A673 (cell line): ENCODE measurements at regions of chr6 and their contacts with region 1.

Region 1: GRCh38 chr6:127342946-127343808 is at the start of gene ECHDC1:
- DNase-seq: peak; percentile 92
- H3K4me3 ChIP-seq: peak within 1 kb of the TSS; percentile 86
- H3K27ac ChIP-seq: peak within 1 kb of the TSS; percentile 97
- H3K4me1 ChIP-seq: peaks cover 26% of the 10 kb centered on the region
- H3K27me3 ChIP-seq: no peaks in the 10 kb centered on the region
- CTCF ChIP-seq: no peak
- total RNA-seq, gene ECHDC1: 79.7 and 102 TPM in 2 replicates

Region 2: DNA sequence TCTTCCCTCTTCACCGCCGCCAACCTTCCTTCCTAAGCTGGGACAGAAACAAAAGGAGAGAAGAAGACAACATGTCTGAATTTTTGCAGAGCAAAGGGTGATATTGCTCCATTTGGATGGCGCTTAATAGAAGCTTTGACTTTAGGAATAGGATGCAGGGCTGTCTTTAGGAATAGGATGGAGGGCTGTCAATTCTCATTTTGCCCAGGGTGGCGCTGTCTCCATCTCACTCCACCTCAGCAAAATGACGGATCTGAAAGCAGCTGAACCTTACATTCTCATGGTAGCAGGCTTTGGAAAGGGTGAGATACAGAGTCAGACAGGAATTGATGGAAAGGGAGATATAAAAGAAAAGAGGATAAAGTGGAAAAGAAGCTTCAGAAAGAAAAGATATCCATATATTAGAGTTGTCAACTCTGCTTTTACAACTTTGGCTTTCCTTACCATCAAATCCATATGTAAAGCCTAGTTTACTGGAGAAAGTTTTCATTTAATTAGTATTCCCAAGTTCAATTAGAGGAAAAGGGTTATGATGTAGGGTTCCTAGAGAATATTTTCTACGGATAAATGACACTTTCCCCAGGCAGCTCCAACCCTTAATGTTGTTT is 173.6 kb after region 1 on chr6:
- CTCF ChIA-PET with region 1: interaction called, 11 read pairs
- POLR2A ChIA-PET with region 1: no interaction called
- intact Hi-C with region 1: loop called (anchors 2 kb)
- DNase-seq: peak; percentile 88
- H3K4me3 ChIP-seq: peak overlapping the region; percentile 73
- H3K27ac ChIP-seq: peak overlapping the region; percentile 63
- H3K4me1 ChIP-seq: peaks cover 27% of the 10 kb centered on the region
- H3K27me3 ChIP-seq: no peaks in the 10 kb centered on the region
- CTCF ChIP-seq: peak; percentile 96